HEK293 (cell line): ENCODE measurements at regions of chr2 and their contacts with region 1.

Region 1: DNA sequence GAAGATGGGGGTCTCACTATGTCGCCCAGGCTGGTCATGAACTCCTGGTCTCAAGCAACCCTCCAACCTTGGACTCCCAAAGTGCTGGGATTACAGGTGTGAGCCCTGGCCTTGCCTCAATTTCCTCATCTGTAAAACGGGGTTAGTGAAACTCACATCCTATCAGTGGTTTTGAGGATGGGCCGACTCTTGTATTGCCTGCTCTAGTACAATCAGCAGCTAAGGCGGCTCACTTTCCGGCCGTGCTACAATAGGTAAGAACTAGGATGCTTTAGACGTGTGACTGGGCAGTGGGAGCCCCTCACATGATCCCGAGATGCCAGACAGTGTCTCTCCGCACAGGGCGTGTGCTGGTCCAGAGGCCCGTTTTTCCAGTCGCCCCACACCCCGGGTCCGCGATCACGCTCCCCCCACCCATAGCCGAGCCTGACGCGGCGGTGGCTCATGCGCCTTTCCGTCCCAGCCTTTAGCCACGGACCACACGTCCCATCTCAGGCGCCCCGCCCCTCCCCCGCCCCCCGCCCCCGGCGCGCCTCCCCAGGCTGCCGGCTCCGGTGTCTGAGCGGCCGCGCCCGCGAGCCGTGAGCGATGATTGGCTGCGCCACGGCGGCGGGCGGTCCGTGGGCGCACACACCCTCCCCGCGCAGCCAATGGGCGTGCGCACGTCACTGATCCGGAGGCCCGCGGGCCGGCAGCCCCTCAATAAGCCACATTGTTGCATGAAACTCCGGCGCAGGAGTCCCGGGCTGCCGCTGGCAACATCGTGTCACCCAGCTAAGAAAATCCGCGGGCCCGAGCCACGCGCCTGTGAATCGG is at the start of gene HK2:
- H3K4me3 ChIP-seq: peak within 1 kb of the TSS; percentile 55
- H3K27ac ChIP-seq: peak within 1 kb of the TSS; percentile 71; the same call in 1 of the 2 replicates
- H3K4me1 ChIP-seq: no peaks in the 10 kb centered on the region
- CTCF ChIP-seq: no peak

Region 2: GRCh38 chr2:74690571-74690970 is 143.1 kb before region 1 on chr2:
- CTCF ChIA-PET with region 1: interaction called, 12 read pairs
- POLR2A ChIA-PET with region 1: no interaction called
- H3K4me3 ChIP-seq: no peak overlapping the region
- H3K27ac ChIP-seq: no peak overlapping the region
- H3K4me1 ChIP-seq: no peaks in the 10 kb centered on the region
- CTCF ChIP-seq: peak; percentile 68; the same call in 1 of the 2 replicates

Region 3: DNA sequence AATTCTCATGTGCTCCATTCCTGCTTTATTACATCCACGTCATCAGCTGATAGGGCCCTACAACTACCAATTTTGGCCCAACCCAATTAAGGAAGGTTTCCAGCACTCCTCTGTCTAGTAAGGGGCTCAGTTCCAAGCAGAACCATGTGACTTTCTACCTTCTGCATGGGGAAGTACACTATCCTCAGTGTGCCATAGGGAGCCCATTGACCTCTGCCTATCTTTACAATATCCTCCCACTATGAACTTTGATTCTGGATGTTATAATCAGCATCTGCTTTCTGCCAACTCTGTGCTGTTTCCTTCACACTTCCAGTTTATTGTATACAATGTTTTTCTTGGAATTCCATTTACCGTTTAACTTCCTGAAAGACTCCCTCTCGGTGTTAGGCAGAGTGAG is 931.0 kb after region 1 on chr2:
- CTCF ChIA-PET with region 1: no interaction called
- POLR2A ChIA-PET with region 1: no interaction called
- H3K4me3 ChIP-seq: no peak overlapping the region
- H3K27ac ChIP-seq: no peak overlapping the region
- H3K4me1 ChIP-seq: no peaks in the 10 kb centered on the region
- CTCF ChIP-seq: no peak